Transverse colon (tissue), 4 donors: ENCODE measurements at regions of chr3 and their contacts with region 1.

Region 1: GRCh38 chr3:49570028-49570654 is 15.9 kb downstream of the BSN start:
- DNase-seq: no peak
- H3K4me3 ChIP-seq: no peak overlapping the region
- H3K27ac ChIP-seq: no peak overlapping the region
- H3K4me1 ChIP-seq: no peaks in the 10 kb centered on the region
- H3K27me3 ChIP-seq: no peaks in the 10 kb centered on the region
- CTCF ChIP-seq: no peak
- EP300 ChIP-seq: no peak
- POLR2A ChIP-seq: no peak

Region 2: DNA sequence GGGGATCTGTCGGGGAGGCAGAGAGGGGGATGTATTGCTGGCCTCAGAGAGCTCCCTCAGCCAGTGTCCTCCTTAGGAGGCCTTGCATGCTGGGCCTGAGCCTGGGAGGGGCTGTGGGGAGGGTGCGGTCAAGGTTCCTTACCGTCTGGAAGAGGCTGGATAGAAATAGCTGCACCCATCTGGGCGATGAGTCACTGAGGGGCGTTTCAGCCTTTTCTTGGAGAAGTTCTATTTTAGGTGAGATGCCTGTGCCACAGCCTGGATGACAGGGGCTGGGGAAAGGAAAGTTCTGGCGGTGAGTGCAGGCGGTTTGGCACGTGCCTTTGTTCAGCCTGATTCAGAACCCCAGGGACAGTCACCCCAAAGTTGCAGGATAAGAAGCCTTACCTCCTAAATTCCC is 68.3 kb after region 1 on chr3:
- in situ Hi-C with region 1: loop called in 1 of 4 experiments (anchors 10 kb)
- intact Hi-C with region 1: no loop called
- DNase-seq: no peak
- H3K4me3 ChIP-seq: no peak overlapping the region
- H3K27ac ChIP-seq: no peak overlapping the region
- H3K4me1 ChIP-seq: no peaks in the 10 kb centered on the region
- H3K27me3 ChIP-seq: no peaks in the 10 kb centered on the region
- CTCF ChIP-seq: no peak
- EP300 ChIP-seq: no peak
- POLR2A ChIP-seq: no peak